Ovary (tissue), 10 donors: ENCODE measurements at regions of chr6 and their contacts with region 1.

Region 1: DNA sequence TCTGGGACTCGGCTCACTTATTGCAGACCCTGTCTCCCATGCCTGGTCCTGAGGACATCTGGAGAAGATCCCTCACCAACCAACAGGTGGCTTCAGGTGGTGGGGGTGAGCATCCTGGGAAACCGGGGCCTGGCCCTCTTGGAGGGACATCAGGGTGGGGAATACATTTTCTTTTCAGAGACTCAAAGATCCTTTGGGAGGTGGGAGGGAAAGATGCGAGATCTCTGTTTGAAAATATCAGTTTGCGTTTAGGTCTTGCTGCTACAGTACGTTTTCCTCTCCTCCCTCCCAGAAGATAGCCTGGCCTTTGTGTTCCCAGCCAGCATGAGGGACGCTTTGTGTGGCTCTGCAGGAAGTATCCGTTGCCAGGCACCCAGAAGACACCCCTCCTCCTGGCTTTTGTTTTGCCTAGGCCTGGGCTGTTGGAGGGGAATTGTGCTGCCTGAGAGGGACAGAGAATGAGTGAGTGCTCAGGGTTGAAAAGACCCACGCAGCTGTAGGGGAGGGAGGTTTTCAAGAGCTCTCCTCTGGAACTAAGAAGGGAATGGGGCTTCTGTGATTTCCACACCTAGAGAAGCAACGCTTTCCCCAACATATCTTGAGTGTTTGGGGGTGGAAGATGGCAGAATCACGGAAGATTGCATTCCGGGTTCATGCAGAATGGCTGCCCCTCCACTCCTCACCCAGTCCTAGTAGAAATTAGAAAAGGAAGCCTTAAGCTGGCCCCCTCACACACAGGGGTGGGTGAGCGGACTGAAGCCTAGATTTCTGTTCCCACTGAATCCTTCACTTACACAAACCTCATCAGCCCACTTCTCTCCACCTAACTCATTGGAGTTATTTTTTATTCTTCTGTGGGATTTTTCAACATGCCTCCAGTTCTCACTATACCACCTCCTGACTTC is 22.0 kb upstream of the SLC2A12 start:
- DNase-seq: no peak
- H3K4me3 ChIP-seq: no peak overlapping the region
- H3K27ac ChIP-seq: no peak overlapping the region
- H3K4me1 ChIP-seq: no peaks in the 10 kb centered on the region
- H3K27me3 ChIP-seq: no peaks in the 10 kb centered on the region
- CTCF ChIP-seq: no peak
- EP300 ChIP-seq: no peak
- POLR2A ChIP-seq: no peak

Region 2: GRCh38 chr6:133966654-133967329 is 107.6 kb before region 1 on chr6:
- intact Hi-C with region 1: loop called in 2 of 4 experiments (anchors 10 kb)
- DNase-seq: no peak
- H3K4me3 ChIP-seq: no peak overlapping the region
- H3K27ac ChIP-seq: no peak overlapping the region
- H3K4me1 ChIP-seq: peaks cover 3% of the 10 kb centered on the region
- H3K27me3 ChIP-seq: no peaks in the 10 kb centered on the region
- CTCF ChIP-seq: no peak
- EP300 ChIP-seq: no peak
- POLR2A ChIP-seq: no peak

Region 3: GRCh38 chr6:134174672-134175198 is 100.3 kb after region 1 on chr6:
- intact Hi-C with region 1: no loop called
- DNase-seq: peak; percentile 95 to 97 (median 97)
- H3K4me3 ChIP-seq: peak overlapping the region; percentile 86
- H3K27ac ChIP-seq: peak overlapping the region; percentile 81 to 97
- H3K4me1 ChIP-seq: peaks cover 7% of the 10 kb centered on the region
- H3K27me3 ChIP-seq: no peaks in the 10 kb centered on the region
- CTCF ChIP-seq: peak; percentile 4 to 14 (median 5)
- EP300 ChIP-seq: no peak
- POLR2A ChIP-seq: peak; percentile 94